ENCODE measurements at regions of chr18 and their contacts with region 1.

Region 1: DNA sequence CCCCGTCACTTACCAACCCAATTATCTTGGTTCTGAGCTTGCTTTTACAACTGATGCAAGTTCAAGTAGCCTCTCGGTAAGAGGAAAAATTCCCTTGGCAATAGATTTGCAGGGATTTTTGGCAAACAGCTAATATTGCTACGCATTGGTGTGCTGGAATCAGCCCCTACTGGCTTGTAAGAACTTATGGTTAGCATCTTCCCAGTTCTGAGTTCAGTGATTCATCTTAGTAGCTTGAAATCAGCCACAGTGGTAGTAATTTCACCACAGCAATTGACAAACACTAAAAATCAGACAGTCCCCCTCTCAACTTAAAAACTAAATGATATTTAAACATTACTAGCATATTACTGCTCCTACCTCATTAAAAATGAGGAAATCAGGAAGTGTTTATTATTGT is 5.9 kb upstream of the RAX start:
- DNase-seq: no peak

Region 2: GRCh38 chr18:59268721-59269562 is 10.3 kb before region 1 on chr18:
- CTCF ChIA-PET with region 1: interaction called, 3 read pairs
- POLR2A ChIA-PET with region 1: interaction called, 10 read pairs
- DNase-seq: peak; percentile 55

Measured in HEK293T (cell line).